ENCODE measurements at regions of chr1 and their contacts with region 1.

Region 1: DNA sequence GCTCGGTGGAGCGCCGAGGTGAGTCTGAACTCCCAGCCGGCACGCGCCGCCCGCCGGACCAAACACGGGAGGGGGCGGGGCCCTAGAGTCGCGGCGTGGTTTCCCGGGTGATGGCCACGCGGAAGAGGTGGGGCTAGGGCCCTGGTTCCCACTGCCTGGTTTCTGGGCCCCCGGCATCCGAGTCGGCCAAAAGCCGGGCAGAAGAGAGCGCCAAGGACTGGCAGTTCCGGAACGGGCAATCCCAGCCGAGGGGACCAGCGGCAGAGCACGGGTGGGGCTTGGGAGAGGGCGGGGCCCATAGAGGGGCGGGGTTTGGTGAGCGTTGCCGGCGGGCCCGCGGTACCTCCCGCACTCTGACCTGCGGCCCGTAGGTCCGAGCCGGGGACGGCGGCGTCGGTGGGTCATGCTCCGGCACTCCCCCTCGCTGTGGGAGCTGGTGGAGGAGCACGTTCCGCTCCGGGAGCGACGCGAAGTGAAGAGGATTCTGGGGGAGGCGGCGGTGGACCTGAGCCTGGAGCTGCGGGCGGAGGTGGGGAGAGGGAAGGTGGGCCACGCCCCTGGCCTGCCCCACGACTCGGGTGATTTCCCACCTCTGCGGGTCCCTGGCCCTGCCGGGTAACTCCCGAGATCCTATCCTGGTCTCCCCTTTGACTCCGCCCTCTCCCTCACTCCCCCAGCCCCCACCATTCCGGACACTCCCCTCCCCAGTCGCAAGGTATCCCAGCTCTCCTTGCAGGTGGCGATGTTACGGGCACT is at the start of gene CCDC24:
- DNase-seq: peak; percentile 89 to 94 (median 92)
- ATAC-seq: peak; percentile 81
- H3K4me3 ChIP-seq: peak within 1 kb of the TSS; percentile 74
- H3K27ac ChIP-seq: peak within 1 kb of the TSS; percentile 51
- H3K4me1 ChIP-seq: peaks cover 15 to 44% of the 10 kb centered on the region in 2 experiments; a peak in 4 of 5 replicates
- H3K27me3 ChIP-seq: no peaks in the 10 kb centered on the region
- CTCF ChIP-seq: peak in 1 of 3 experiments; percentile 13; a peak in 1 of 6 replicates
- EP300 ChIP-seq: no peak
- POLR2A ChIP-seq: peak; percentile 82
- RAD21 ChIP-seq: peak in 1 of 2 experiments; percentile 9; a peak in 2 of 4 replicates
- polyA plus RNA-seq, gene CCDC24: 0.31 to 0.64 TPM

Region 2: DNA sequence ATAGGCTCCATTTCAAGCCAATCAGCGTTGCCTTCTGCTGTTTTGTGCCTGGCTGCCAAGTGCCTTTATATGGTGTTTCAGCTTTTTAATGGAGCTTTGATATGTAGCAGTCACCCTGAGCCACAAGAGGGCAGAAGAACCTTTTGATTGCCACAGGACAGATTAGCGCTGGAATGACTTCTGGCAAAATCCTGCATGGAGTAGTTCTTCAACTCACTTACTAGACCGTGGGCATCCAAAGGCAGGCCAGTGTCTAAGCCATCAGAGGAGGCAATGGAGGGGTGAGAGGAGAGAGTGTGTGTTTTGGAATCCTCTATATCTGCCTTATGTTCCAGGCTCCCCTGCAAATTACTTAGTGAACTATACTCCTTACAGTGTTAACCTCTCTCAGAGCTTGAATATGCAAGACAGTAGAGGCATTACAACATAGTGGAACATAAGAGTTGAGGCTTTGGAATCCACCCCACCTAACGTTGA is 228.1 kb before region 1 on chr1:
- CTCF ChIA-PET with region 1: no interaction called
- POLR2A ChIA-PET with region 1: interaction called, 3 read pairs
- in situ Hi-C with region 1: no loop called
- intact Hi-C with region 1: loop called (anchors 5 kb)
- DNase-seq: peak; percentile 58 to 84 (median 66)
- ATAC-seq: peak; percentile 95
- H3K4me3 ChIP-seq: no peak overlapping the region
- H3K27ac ChIP-seq: no peak overlapping the region
- H3K4me1 ChIP-seq: peaks cover 7 to 26% of the 10 kb centered on the region in 2 experiments; a peak in 3 of 5 replicates
- H3K27me3 ChIP-seq: no peaks in the 10 kb centered on the region
- CTCF ChIP-seq: peak; percentile 92 to 98 (median 92)
- EP300 ChIP-seq: no peak
- POLR2A ChIP-seq: no peak
- RAD21 ChIP-seq: peak; percentile 98

Region 3: GRCh38 chr1:43974443-43975248 is 17.0 kb before region 1 on chr1 and contains the start of gene ATP6V0B:
- CTCF ChIA-PET with region 1: no interaction called
- POLR2A ChIA-PET with region 1: interaction called, 7 read pairs
- in situ Hi-C with region 1: no loop called
- intact Hi-C with region 1: loop called (anchors 2 kb)
- DNase-seq: peak; percentile 91 to 99 (median 95)
- ATAC-seq: peak; percentile 87
- H3K4me3 ChIP-seq: peak within 1 kb of the TSS; percentile 87
- H3K27ac ChIP-seq: peak within 1 kb of the TSS; percentile 89
- H3K4me1 ChIP-seq: peaks cover 41 to 67% of the 10 kb centered on the region in 2 experiments
- H3K27me3 ChIP-seq: no peaks in the 10 kb centered on the region
- CTCF ChIP-seq: peak in 1 of 3 experiments; percentile 33; a peak in 2 of 6 replicates
- EP300 ChIP-seq: no peak; the same call in 1 of the 2 replicates
- POLR2A ChIP-seq: peak; percentile 81
- RAD21 ChIP-seq: 0 out of 4 replicates have a peak, but pooled peaks of 1 of the 2 experiments have one; percentile 13
- polyA plus RNA-seq, gene ATP6V0B: 137 to 276 TPM

Region 4: GRCh38 chr1:44002606-44003157 is 11.0 kb after region 1 on chr1:
- CTCF ChIA-PET with region 1: no interaction called
- POLR2A ChIA-PET with region 1: interaction called, 10 read pairs
- in situ Hi-C with region 1: no loop called
- intact Hi-C with region 1: no loop called
- DNase-seq: no peak
- ATAC-seq: no peak
- H3K4me3 ChIP-seq: no peak overlapping the region
- H3K27ac ChIP-seq: no peak overlapping the region
- H3K4me1 ChIP-seq: peaks cover 0 to 49% of the 10 kb centered on the region in 2 experiments; a peak in 3 of 5 replicates
- H3K27me3 ChIP-seq: no peaks in the 10 kb centered on the region
- CTCF ChIP-seq: peak; percentile 20 to 50 (median 48); a peak in 4 of 6 replicates
- EP300 ChIP-seq: no peak
- POLR2A ChIP-seq: no peak
- RAD21 ChIP-seq: no peak